ENCODE measurements at regions of chr7 and their contacts with region 1.

Region 1: DNA sequence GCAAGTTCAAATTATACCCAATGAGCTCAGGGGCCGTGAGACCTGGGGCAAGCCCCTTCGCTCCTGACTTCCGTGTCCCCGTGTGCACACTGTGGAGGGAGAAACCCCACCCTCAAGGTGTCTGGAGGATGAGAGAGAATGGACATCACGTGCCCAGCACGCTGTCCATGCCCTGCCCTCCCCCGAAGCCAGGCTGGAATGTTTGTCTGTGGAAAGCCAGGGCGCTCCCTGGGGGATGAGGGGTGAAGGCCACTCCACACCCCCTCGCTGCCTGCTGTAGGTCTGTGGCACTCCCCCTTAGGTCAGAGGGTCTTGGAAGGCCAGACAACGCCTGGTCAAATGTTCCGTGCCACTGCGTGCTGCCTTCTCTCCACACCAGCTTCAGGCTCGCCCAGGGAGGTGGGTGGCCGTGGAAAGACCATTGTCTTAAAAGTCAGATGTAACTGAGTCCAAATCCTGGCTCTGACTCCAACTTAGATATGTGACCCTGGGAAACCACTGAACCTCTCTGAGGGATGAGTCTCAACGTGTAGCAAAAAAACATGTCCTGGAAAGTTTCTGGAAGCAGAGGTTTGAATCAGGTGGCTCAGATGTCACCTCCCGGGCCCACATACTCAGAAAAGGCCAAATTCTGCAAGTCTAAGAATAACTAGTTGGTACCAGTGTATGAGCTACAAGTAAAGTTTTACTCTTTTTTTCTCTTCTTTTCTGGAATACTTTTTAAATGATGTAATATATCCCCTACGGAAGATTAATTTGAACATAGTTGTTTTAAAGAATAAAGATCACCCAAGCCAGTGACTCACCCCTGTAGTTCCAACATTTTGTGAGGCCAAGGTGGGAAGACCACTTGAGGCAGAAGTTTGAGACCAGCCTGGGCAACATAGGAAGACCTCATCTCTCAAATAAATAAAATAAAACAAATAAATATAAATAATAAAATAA is 24.9 kb downstream of the RCC1L start:
- DNase-seq: no peak
- ATAC-seq: no peak
- H3K4me3 ChIP-seq: no peak overlapping the region
- H3K27ac ChIP-seq: no peak overlapping the region
- H3K4me1 ChIP-seq: no peaks in the 10 kb centered on the region
- H3K27me3 ChIP-seq: no peaks in the 10 kb centered on the region
- CTCF ChIP-seq: no peak

Region 2: GRCh38 chr7:74429153-74429747 is 619.5 kb before region 1 on chr7:
- CTCF ChIA-PET with region 1: no interaction called
- POLR2A ChIA-PET with region 1: no interaction called
- intact Hi-C with region 1: loop called (anchors 10 kb)
- DNase-seq: no peak
- ATAC-seq: no peak
- H3K4me3 ChIP-seq: no peak overlapping the region
- H3K27ac ChIP-seq: no peak overlapping the region
- H3K4me1 ChIP-seq: no peaks in the 10 kb centered on the region
- H3K27me3 ChIP-seq: no peaks in the 10 kb centered on the region
- CTCF ChIP-seq: no peak